Psoas muscle (tissue), 8 donors: ENCODE measurements at regions of chr1 and their contacts with region 1.

Region 1: DNA sequence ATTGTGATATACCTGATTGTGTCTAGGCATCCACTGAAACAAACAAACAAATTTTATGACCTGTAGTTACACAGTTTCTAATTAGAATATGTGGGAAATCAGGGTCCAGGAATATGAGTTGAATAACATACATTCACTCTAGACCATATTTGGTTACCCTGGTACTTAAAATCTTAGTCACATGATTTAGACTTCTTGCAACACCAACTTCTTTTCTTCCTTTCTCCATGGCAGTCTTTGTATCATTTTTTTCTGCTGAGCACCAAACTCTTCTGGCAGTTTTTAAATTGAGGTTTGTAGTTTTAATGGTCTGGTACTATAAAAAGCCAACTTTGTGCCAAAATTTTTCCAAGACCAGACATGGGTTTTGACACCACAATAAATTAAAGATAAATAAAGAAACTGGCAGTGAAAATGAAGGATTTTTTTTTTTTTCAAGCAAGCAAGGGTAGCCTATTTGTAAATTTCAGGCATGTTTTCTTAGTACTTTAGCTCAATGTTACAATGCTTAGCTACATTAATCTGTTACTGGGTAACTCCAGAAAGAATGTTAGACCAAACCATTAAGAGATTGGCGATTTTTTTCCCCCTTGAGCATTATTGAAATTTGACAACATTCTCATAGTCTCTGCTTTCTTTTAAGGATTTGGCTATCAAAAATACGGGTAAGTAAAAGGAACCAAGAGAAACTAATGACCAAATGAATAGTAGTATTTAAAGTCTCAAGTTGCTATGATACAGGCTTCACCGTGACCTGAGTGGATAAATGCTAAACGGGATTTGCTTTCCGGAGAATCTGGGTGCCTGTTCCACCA is 108.5 kb downstream of the NFIA start:
- DNase-seq: no peak
- ATAC-seq: no peak
- H3K4me3 ChIP-seq: no peak overlapping the region
- H3K27ac ChIP-seq: peak overlapping the region; percentile 46
- H3K4me1 ChIP-seq: peaks cover 49% of the 10 kb centered on the region
- H3K27me3 ChIP-seq: no peaks in the 10 kb centered on the region
- CTCF ChIP-seq: no peak

Region 2: GRCh38 chr1:61098333-61098732 is 92.5 kb before region 1 on chr1:
- intact Hi-C with region 1: loop called in 1 of 2 experiments (anchors 2 kb)
- DNase-seq: no peak
- ATAC-seq: no peak
- H3K4me3 ChIP-seq: no peak overlapping the region
- H3K27ac ChIP-seq: no peak overlapping the region
- H3K4me1 ChIP-seq: peaks cover 77% of the 10 kb centered on the region
- H3K27me3 ChIP-seq: no peaks in the 10 kb centered on the region
- CTCF ChIP-seq: no peak

Region 3: DNA sequence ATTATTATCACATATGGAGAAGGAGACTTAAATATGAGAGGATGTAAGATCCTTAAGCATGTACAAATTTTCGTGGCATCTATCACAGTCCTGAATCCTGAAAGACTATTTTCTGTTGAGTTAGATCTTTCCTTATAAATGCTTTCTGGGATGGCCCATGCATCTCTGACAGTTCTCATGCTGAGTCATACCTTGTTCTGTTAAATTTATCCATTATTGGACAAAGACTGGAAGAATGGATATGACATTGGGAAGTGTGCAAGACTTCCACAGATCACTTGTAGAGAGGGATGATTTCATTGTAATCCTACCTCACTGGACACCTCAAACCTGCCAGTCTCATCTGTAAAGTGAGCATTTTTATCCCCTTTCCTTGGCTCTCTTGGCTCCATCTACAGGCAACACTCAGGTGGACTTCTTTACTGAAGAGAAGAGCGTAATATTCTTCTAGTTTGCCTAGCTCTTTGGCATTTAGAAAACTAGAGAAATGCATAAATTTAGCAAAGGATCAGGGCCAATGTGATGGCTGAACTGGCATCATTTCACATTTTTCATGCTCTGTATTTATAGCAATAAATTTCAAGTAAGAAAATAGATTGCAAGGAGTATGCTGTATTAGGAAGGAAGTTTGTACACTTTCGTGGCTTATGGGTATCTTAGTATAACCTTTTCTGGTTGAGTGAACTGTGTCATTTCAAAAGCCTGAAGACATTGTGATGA is 19.8 kb after region 1 on chr1:
- intact Hi-C with region 1: no loop called
- DNase-seq: no peak
- ATAC-seq: peak in 2 of 4 donors; percentile 42 to 60
- H3K4me3 ChIP-seq: no peak overlapping the region
- H3K27ac ChIP-seq: no peak overlapping the region
- H3K4me1 ChIP-seq: peaks cover 39% of the 10 kb centered on the region
- H3K27me3 ChIP-seq: no peaks in the 10 kb centered on the region
- CTCF ChIP-seq: peak; percentile 14

Region 4: DNA sequence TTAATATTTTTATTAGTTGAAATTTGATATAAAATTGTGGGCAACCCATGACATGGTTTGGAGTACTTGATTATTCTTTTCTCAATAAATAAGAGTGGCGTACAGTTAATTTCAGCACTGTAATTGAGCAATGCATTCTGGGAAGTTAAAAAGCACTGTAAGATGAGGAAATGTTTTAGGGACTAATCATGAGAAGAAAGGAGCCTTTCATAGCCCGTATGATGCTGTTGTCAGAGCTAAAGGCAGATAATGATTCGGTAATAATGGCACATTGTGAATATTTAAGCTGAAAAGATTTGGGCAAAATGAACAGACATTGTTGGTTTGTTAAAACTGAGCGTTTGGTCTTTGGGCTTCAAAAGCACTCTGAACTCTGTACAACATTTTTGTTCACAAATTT is 30.8 kb after region 1 on chr1:
- intact Hi-C with region 1: loop called in 1 of 2 experiments (anchors 5 kb)
- DNase-seq: no peak
- ATAC-seq: peak in 1 of 4 donors; percentile 62
- H3K4me3 ChIP-seq: peak overlapping the region; percentile 10
- H3K27ac ChIP-seq: peak overlapping the region; percentile 14
- H3K4me1 ChIP-seq: peaks cover 31% of the 10 kb centered on the region
- H3K27me3 ChIP-seq: no peaks in the 10 kb centered on the region
- CTCF ChIP-seq: no peak

Region 5: DNA sequence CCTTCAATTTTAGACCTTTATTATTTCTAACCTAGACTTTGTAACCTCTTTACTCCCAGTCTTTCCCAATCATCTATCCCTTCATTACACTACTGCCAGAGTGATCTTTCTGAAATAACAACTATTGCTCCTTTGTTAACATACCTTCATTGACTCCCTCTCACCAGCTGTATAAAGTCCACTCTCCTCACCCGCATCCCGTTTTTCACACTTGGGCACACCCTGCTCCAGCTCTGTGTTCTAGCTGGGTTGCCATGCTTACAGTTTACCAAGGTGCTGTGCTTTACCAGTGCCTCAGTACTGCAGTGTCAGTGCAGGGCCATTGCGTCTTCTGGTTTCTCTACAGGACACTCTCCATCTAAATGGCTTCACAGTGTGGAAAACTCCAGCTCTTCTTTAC is 39.7 kb after region 1 on chr1:
- intact Hi-C with region 1: loop called (anchors 5 kb)
- DNase-seq: no peak
- ATAC-seq: no peak
- H3K4me3 ChIP-seq: no peak overlapping the region
- H3K27ac ChIP-seq: no peak overlapping the region
- H3K4me1 ChIP-seq: peaks cover 12% of the 10 kb centered on the region
- H3K27me3 ChIP-seq: no peaks in the 10 kb centered on the region
- CTCF ChIP-seq: no peak

Region 6: DNA sequence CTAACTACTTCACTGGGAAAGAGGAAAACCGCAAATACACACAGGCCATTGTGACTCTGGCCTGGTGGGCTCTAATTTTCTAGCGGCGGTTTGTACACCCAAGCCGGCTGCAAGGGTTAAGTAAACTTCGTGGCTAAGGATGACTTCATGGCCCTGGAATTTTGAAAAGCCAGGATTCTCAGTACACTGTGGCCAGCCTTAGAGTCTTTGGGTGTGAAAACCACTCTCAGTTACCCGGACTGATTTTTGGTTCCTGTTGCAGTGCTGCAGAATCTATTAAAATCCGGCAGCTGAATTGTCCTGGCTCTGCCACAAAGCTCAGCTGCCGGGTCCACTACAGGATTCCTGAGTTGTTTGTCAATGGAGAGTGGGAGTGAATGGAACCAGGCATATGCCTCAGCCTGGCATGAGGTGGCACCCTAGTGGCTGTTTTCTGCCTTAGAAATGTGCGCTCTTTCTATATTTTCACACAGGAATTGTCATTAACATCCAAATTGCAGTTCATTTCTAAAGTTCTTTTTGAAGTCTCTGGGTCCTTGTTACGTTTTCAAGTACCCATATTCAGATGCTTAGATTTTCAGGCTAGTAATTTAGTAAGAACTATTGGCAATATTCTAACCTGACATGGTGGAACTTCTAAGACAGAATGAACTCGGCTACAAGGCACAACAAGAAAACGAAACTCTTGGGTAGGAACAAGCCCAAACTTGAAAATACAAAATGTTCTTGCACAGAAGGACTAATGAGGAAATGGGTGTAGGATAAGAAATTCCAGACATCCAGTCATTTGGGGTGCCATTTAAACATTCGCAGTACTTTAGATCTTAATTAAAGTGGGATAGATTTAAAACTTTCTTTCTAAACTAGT is 147.4 kb after region 1 on chr1:
- intact Hi-C with region 1: loop called in 1 of 2 experiments (anchors 5 kb)
- DNase-seq: peak; percentile 71 to 84
- ATAC-seq: peak; percentile 88 to 92 (median 92)
- H3K4me3 ChIP-seq: peak overlapping the region; percentile 53
- H3K27ac ChIP-seq: peak overlapping the region; percentile 87
- H3K4me1 ChIP-seq: peaks cover 33% of the 10 kb centered on the region
- H3K27me3 ChIP-seq: no peaks in the 10 kb centered on the region
- CTCF ChIP-seq: peak; percentile 72